Calu3 (cell line): ENCODE measurements at regions of chr6 and their contacts with region 1.

Region 1: GRCh38 chr6:33014841-33015634 is 5.6 kb upstream of the HLA-DOA start:
- DNase-seq: peak; percentile 78
- H3K4me3 Mint-ChIP-seq: no peak overlapping the region
- H3K27ac Mint-ChIP-seq: no peak overlapping the region
- H3K4me1 Mint-ChIP-seq: peaks cover 37% of the 10 kb centered on the region
- H3K27me3 Mint-ChIP-seq: peaks cover 46% of the 10 kb centered on the region
- CTCF ChIP-seq: peak; percentile 85

Region 2: DNA sequence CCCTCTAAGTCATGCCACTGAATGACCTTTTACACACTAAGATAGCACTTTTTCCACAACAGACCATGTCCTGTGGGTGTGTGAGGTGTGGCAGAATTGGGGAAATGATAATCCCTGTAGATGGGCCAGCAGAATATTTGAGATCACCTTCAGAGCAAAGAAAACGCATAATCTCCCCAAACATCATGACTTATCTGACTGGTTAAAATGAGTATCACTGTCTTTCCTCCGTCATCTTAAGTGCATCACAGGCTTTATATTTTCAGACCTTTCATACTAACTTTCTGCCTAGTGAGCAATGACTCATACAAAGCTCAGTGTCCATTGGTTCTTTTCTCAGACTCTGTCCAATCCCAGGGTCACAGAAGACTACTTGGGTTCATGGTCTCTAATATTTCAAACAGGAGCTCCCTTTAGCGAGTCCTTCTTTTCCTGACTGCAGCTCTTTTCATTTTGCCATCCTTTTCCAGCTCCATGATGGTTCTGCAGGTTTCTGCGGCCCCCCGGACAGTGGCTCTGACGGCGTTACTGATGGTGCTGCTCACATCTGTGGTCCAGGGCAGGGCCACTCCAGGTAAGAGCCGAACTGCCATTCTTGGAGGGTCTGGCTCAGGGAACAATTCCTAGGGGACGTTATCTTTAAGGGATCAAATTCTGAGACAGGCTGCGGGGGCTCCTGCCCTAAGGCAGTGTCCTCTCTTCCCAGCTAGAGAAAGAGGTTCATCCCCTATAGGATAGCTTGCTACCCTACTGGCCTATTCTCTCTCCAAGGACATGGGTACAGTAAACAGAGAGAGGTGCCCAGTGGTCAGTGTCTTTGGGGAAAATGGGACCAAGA is 60.7 kb after region 1 on chr6 and contains the start of gene HLA-DPB1:
- CTCF ChIA-PET with region 1: interaction called, 5 read pairs
- intact Hi-C with region 1: loop called (anchors 1 kb)
- DNase-seq: peak; percentile 37
- H3K4me3 Mint-ChIP-seq: no peak within 1 kb of the TSS
- H3K27ac Mint-ChIP-seq: no peak within 1 kb of the TSS
- H3K4me1 Mint-ChIP-seq: no peaks in the 10 kb centered on the region
- H3K27me3 Mint-ChIP-seq: peaks cover 81% of the 10 kb centered on the region
- CTCF ChIP-seq: no peak
- total RNA-seq, gene HLA-DPB1: 12.0 and 18.3 TPM in 2 replicates

Region 3: DNA sequence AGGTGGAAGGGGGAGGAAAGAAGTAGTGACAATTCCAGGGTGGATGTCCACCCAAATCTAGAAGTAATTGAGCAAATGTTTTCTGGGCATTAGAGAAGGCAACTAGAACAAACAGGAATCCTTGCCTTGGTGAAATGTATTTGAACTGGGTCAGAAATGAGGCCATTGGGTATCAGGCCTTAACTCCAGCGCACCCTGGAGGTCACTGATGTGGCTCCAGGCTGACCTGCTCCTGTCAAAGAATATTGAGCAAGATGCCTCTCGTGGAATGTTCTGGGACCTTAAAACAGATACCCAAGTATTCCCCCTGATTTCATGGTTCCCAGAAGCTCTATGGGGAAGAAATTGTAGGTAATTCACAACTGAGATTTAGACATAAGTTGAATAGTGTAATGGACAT is 67.7 kb after region 1 on chr6:
- CTCF ChIA-PET with region 1: interaction called, 4 read pairs
- intact Hi-C with region 1: loop called (anchors 2 kb)
- DNase-seq: peak; percentile 50
- H3K4me3 Mint-ChIP-seq: no peak overlapping the region
- H3K27ac Mint-ChIP-seq: no peak overlapping the region
- H3K4me1 Mint-ChIP-seq: no peaks in the 10 kb centered on the region
- H3K27me3 Mint-ChIP-seq: peaks cover 99% of the 10 kb centered on the region
- CTCF ChIP-seq: no peak

Region 4: GRCh38 chr6:33091957-33092356 is 76.9 kb after region 1 on chr6:
- CTCF ChIA-PET with region 1: no interaction called
- intact Hi-C with region 1: loop called (anchors 2 kb)
- DNase-seq: peak; percentile 75
- H3K4me3 Mint-ChIP-seq: no peak overlapping the region
- H3K27ac Mint-ChIP-seq: no peak overlapping the region
- H3K4me1 Mint-ChIP-seq: peaks cover 8% of the 10 kb centered on the region
- H3K27me3 Mint-ChIP-seq: peaks cover 78% of the 10 kb centered on the region
- CTCF ChIP-seq: peak; percentile 85

Region 5: GRCh38 chr6:33126101-33126714 is 111.2 kb after region 1 on chr6:
- CTCF ChIA-PET with region 1: interaction called, 9 read pairs
- intact Hi-C with region 1: loop called (anchors 5 kb)
- DNase-seq: peak; percentile 85
- H3K4me3 Mint-ChIP-seq: no peak overlapping the region
- H3K27ac Mint-ChIP-seq: no peak overlapping the region
- H3K4me1 Mint-ChIP-seq: no peaks in the 10 kb centered on the region
- H3K27me3 Mint-ChIP-seq: peaks cover 98% of the 10 kb centered on the region
- CTCF ChIP-seq: peak; percentile 69

Region 6: GRCh38 chr6:33147807-33148666 is 133.0 kb after region 1 on chr6:
- CTCF ChIA-PET with region 1: interaction called, 11 read pairs
- intact Hi-C with region 1: loop called (anchors 2 kb)
- DNase-seq: peak; percentile 48
- H3K4me3 Mint-ChIP-seq: no peak overlapping the region
- H3K27ac Mint-ChIP-seq: no peak overlapping the region
- H3K4me1 Mint-ChIP-seq: no peaks in the 10 kb centered on the region
- H3K27me3 Mint-ChIP-seq: peaks cover 59% of the 10 kb centered on the region
- CTCF ChIP-seq: peak; percentile 76